ENCODE measurements at regions of chr12 and their contacts with region 1.

Region 1: GRCh38 chr12:7638760-7639555 is 26.8 kb downstream of the APOBEC1 start:
- DNase-seq: peak; percentile 24
- ATAC-seq: peak; percentile 88
- H3K4me3 Mint-ChIP-seq: peak overlapping the region; percentile 46
- H3K27ac Mint-ChIP-seq: peak overlapping the region; percentile 15
- H3K4me1 Mint-ChIP-seq: peaks cover 21% of the 10 kb centered on the region
- H3K27me3 Mint-ChIP-seq: peaks cover 24% of the 10 kb centered on the region
- CTCF ChIP-seq: peak; percentile 91

Region 2: DNA sequence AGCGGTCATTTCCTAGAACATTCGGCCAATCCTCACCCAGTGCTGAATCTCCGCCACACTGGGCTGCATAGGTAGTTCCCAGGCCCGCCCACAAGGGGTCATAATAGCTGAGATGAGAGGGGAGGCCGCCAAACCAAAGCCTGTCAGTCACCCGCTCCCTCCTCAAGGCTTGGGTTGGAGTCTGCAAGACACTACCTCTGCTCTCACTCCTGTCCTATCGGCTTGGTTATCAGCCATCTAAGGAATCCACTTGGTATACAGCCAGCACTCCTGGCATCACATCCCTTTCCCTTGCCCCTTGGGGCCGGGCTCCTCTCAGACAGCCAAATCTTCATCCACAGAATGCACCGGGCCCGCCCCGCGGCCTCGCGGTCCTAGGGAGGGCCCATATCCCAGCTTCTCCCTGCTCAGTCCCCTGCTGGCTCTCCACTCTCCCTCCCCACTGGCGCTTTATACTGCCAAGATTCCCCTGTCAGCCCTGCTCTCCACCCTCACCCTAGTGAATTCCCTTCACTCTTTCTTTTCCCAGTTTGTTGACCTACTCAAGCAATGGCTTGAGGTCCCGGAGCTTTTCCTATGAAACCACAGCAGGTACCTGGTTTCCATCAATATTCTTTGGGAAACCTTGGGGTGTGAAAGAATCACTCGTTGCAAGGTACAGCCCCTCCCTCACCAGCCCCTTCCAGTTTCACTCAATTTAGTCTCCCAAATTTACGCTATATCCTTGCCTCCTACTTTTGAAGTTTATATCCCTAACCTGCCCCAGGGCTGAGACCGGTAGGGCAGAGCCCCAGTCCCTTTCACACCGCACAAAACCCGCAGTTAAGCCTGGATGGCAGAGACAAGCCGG is 1084.6 kb before region 1 on chr12:
- CTCF ChIA-PET with region 1: no interaction called
- POLR2A ChIA-PET with region 1: no interaction called
- intact Hi-C with region 1: loop called (anchors 10 kb)
- DNase-seq: peak; percentile 61
- ATAC-seq: peak; percentile 77
- H3K4me3 Mint-ChIP-seq: peak overlapping the region; percentile 84
- H3K27ac Mint-ChIP-seq: peak overlapping the region; percentile 70
- H3K4me1 Mint-ChIP-seq: peaks cover 45% of the 10 kb centered on the region
- H3K27me3 Mint-ChIP-seq: no peaks in the 10 kb centered on the region
- CTCF ChIP-seq: peak; percentile 43

Region 3: GRCh38 chr12:6927379-6928024 is 711.5 kb before region 1 on chr12 and contains the start of gene ATN1:
- CTCF ChIA-PET with region 1: no interaction called
- POLR2A ChIA-PET with region 1: no interaction called
- intact Hi-C with region 1: loop called (anchors 10 kb)
- DNase-seq: peak; percentile 58
- ATAC-seq: peak; percentile 42
- H3K4me3 Mint-ChIP-seq: peak within 1 kb of the TSS; percentile 86
- H3K27ac Mint-ChIP-seq: peak within 1 kb of the TSS; percentile 86
- H3K4me1 Mint-ChIP-seq: peaks cover 54% of the 10 kb centered on the region
- H3K27me3 Mint-ChIP-seq: no peaks in the 10 kb centered on the region
- CTCF ChIP-seq: no peak
- total RNA-seq, gene ATN1: 42.8 and 50.9 TPM in 2 replicates

Region 4: DNA sequence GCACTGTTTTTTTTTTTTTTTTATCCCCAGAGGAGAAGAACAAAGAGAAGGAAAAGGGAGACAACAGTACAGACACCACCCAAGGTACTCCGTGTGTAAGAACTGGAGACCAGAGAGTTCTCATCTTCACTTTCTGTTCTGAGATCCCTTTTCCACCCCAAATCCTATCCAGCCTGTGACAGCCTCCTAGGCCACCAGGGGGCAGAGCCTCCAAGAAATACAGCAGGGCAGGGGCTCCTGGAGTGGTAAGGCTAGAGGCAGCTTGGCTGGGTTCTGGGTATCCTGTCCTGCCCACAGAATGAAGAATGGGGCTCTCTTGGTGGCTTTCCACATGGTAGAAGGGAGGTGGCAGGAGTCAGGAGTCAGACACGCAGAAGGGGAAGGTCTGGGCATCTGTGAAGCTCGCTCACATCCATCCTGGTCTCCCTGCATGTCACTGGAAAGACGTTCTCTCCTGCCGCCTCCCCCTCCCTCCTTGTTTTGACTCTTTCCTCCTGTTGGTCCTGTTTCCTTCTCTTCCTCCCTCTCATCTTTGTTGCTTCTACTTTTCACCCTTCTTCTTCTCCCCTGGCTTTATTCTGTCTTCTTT is 496.8 kb before region 1 on chr12:
- CTCF ChIA-PET with region 1: interaction called, 3 read pairs
- POLR2A ChIA-PET with region 1: no interaction called
- intact Hi-C with region 1: loop called (anchors 1 kb)
- DNase-seq: no peak
- ATAC-seq: peak; percentile 54
- H3K4me3 Mint-ChIP-seq: no peak overlapping the region
- H3K27ac Mint-ChIP-seq: no peak overlapping the region
- H3K4me1 Mint-ChIP-seq: no peaks in the 10 kb centered on the region
- H3K27me3 Mint-ChIP-seq: no peaks in the 10 kb centered on the region
- CTCF ChIP-seq: no peak

Region 5: GRCh38 chr12:7374423-7375144 is 264.4 kb before region 1 on chr12:
- CTCF ChIA-PET with region 1: no interaction called
- POLR2A ChIA-PET with region 1: no interaction called
- intact Hi-C with region 1: loop called (anchors 5 kb)
- DNase-seq: no peak
- ATAC-seq: no peak
- H3K4me3 Mint-ChIP-seq: no peak overlapping the region
- H3K27ac Mint-ChIP-seq: no peak overlapping the region
- H3K4me1 Mint-ChIP-seq: no peaks in the 10 kb centered on the region
- H3K27me3 Mint-ChIP-seq: peaks cover 17% of the 10 kb centered on the region
- CTCF ChIP-seq: no peak

Region 6: DNA sequence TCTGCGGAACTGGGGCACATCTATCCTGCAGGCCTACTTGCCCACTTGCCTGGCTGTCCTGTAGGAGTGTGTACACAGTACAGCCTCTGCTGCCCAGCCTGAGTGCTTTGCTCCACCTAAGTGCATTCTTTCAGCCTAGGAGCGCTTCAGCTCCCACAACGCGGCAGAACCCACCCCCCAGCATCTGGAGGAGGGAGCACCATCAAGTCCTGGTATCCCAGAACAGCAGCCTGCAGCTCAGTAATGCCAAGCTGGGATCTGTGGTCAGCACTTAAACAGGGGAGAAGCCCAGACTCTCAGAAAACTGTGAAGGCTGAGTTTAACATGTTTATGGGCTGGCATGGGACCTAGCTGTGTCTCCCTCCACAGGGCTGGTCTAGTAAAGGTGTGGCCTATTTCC is 55.4 kb before region 1 on chr12:
- CTCF ChIA-PET with region 1: no interaction called
- POLR2A ChIA-PET with region 1: no interaction called
- intact Hi-C with region 1: loop called (anchors 1 kb)
- DNase-seq: no peak
- ATAC-seq: no peak
- H3K4me3 Mint-ChIP-seq: no peak overlapping the region
- H3K27ac Mint-ChIP-seq: no peak overlapping the region
- H3K4me1 Mint-ChIP-seq: peaks cover 3% of the 10 kb centered on the region
- H3K27me3 Mint-ChIP-seq: peaks cover 12% of the 10 kb centered on the region
- CTCF ChIP-seq: no peak